ENCODE measurements at regions of chr19 and their contacts with region 1.

Region 1: DNA sequence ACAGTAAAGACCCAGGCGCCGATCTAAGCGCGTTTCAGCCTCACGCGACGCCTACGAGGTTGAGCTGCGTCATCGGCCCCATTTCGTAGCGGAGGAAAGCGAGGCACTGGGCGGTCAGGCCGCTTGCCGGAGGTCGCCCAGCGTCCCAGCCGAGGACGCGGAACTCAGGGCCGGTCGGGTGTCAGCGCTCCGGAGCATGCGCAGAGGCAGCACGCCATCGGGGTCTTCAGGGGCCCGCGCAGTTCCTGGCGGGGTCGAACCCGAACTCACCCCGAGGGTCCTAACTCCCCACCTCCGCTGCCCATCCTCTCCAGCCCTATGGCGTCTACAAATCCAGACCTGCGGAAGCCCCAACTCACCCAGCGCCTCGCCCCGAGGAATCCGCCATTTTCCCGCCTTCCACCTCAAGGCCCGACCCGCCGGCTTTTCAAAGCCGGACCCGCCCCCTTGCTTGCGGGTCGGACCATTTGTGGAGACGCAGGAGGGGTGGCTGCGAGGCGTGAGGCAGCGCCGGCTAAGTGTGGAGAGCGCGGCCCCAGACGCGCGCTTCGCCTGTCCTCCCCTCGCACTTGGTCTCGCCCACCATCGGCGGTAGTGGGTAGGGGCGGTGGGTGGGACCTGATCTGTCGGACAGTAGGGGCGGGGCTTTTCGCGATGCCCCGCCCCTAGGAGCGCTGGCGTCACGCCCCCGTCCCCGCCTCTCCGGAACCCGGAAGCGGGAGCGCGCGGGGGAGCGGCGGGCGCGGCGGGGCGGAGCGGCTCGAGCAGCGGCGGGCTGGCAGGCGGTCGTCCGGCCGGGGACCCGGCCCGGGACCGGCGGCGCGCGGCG is at the starts of genes HAUS8 and MYO9B:
- DNase-seq: peak; percentile 99
- ATAC-seq: peak; percentile 98
- total RNA-seq, gene HAUS8: 5.9 TPM
- total RNA-seq, gene MYO9B: 90.7 TPM

Region 2: DNA sequence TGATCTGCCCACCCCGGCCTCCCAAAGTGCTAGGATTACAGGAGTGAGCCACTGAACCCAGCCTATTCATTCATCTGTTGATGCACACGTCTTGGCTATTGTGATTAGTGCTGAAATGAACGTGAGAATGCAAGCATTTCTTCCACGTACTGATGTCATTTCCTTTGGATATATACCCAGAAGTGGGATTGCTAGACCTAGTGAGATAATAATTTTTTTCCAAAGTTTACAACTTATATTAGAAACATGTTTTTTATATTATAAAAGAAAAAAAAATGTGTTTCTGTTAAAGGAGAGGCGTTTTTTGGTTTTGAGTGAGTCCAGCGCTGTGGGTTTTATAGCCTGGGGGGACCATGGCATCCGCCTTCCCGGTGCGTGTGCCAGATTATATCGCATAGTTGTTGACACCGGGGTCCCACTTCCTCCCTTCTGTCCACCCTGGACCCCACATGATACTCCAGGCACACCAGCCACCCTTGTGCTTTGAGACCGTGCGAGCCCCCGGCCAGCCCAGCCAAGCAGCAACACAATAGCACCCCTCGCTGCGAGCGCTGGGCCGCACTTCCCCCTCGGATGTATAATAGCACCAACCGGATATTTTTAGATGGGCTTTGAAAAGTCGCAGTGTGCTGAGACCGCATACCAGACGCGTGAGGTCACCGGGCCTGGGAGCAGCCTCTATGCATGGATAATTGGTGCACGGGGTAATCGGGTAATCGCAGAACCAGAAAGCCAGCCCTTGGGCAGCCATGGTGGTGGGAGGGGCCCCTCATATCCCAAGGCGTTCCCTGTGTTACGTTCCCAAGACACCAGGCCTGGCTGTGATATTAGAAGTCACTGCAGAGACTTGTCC is 60.0 kb after region 1 on chr19:
- intact Hi-C with region 1: loop called (anchors 10 kb)
- DNase-seq: peak; percentile 92
- ATAC-seq: peak; percentile 95

Measured in sciatic nerve (tissue), 2 donors.